Naive thymus-derived CD8-positive, alpha-beta T cell (primary cell): ENCODE measurements at regions of chr1 and their contacts with region 1.

Region 1: GRCh38 chr1:1059494-1060280 is 14.4 kb downstream of the RNF223 start:
- DNase-seq: peak; percentile 78 to 94 (median 93)
- ATAC-seq: peak; percentile 70 to 73
- H3K4me3 Mint-ChIP-seq: peak overlapping the region; percentile 61 to 85 (median 78)
- H3K27ac Mint-ChIP-seq: peak overlapping the region in 4 of 10 donors; percentile 43 to 71 (median 62)
- H3K4me1 Mint-ChIP-seq: peaks cover 10 to 33% (median 24%) of the 10 kb centered on the region in 4 donors
- H3K27me3 Mint-ChIP-seq: peaks cover 0 to 32% (median 9%) of the 10 kb centered on the region in 5 donors

Region 2: GRCh38 chr1:1040004-1040991 is 19.4 kb before region 1 on chr1:
- POLR2A ChIA-PET with region 1: interaction called, 12 read pairs
- DNase-seq: peak; percentile 68 to 92 (median 83)
- ATAC-seq: peak; percentile 93 to 94
- H3K4me3 Mint-ChIP-seq: peak overlapping the region; percentile 57 to 84 (median 79)
- H3K27ac Mint-ChIP-seq: no peak overlapping the region
- H3K4me1 Mint-ChIP-seq: peaks cover 19 to 32% (median 20%) of the 10 kb centered on the region in 4 donors
- H3K27me3 Mint-ChIP-seq: peaks cover 0 to 10% (median 0%) of the 10 kb centered on the region in 5 donors

Region 3: DNA sequence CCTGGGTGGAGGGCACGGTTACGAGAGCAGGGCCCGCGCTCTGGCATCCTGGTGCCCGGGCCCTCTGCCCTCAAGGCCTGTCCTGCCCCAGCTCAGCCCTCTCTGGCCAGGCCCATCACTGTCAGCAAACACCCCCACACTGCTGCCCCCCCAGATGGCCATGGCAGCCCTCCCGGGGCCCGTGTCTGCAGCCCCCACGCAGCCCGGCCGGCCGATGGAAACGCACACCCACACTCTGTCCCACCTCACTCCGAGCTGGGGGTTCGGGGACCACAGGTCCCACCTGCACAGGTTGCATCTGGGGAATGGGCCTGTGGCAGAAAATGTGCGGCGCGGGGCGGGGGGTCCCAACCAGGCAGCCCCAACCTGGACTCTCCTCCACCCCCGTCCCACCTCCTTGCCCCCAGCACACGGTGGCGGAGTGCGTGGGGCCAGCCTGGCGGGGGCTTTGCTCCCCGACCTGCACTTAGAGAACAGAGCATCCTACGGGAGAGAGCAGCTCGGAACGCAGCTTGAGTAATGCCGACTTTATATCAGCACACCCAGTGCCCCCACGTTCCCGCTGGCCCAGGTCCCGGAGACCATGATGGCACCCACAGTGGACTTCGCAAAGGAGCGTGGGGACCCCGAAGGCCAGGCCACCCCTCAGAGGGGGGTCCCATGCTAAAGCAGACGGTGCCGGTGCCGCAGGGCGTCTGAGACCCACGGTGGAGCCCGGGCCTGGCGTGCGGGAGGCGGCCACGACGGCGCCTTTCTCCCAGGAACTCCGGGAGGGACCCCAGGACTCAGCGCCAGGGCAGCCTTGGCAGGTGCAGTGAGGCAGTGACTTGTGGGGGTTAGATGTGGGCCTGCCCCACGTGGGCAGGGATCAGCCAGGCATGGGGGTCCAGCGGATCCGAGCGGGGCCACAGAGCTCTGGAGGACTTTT is 21.9 kb after region 1 on chr1:
- POLR2A ChIA-PET with region 1: no interaction called
- DNase-seq: peak in 1 of 10 donors; percentile 6
- ATAC-seq: no peak
- H3K4me3 Mint-ChIP-seq: no peak overlapping the region
- H3K27ac Mint-ChIP-seq: peak overlapping the region in 1 of 10 donors; percentile 40
- H3K4me1 Mint-ChIP-seq: peaks cover 0 to 4% (median 1%) of the 10 kb centered on the region in 4 donors
- H3K27me3 Mint-ChIP-seq: no peaks in the 10 kb centered on the region

Region 4: DNA sequence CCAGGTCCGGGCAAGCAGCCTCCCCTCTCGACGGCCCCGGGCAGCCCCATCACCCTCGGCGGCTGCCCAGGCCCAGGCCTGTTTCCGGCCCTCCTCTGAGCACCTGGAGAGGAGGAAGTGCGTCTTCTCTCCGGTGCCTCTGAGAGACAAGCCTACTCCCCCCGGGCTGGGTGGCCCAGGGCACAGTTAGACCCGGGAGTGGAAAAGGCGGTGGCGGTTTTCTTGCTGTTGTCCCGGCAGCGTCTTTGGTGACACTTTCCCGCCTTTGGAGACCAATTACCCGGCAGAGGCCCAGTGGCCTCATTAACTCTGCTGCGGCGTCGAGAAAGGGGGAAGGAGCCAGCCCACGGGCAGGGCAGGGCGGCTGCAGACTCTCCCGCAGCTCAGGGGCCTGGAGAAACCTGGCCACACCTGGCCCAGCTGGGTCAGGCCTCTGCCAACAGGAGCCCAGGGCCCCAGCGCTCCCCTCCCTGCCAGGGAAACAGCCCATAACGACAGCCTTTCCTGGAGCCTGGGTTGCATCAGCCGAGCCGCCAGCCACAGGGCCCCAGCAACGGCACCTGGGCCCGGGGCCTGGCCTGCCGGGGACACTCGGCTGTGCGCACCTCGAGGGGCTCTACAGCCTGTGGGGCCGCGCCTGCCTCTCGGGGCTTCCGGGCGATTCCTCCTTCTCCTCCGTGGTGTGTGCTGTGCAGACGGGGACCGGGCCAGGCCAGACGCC is 84.6 kb after region 1 on chr1:
- POLR2A ChIA-PET with region 1: no interaction called
- DNase-seq: peak; percentile 51 to 87 (median 66)
- ATAC-seq: peak; percentile 94 to 99
- H3K4me3 Mint-ChIP-seq: peak overlapping the region; percentile 28 to 83 (median 61)
- H3K27ac Mint-ChIP-seq: peak overlapping the region; percentile 93 to 98 (median 96)
- H3K4me1 Mint-ChIP-seq: peaks cover 4 to 29% (median 19%) of the 10 kb centered on the region in 4 donors
- H3K27me3 Mint-ChIP-seq: no peaks in the 10 kb centered on the region